ENCODE measurements at regions of chr20 and their contacts with region 1.

Region 1: DNA sequence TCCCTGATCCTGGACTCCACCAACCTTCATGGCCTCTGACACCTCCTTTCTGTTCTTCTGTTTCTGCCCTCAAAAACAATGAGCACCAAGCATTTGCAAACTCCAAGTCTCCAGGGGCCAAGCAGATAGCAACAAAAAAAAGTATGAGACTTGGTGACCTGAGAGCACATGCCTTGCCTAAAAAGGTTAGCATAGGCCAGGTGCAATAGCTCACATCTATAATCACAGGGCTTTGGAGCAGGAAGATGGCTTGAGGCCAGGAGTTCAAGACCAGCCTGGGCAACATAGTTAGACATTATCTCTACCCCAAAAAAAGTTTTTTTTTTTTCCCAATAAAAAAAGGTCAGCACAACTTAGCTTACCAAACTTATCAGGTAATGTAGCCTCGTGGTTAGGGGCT is 13.7 kb upstream of the HM13 start:
- DNase-seq: no peak
- ATAC-seq: no peak
- H3K4me3 ChIP-seq: no peak overlapping the region
- H3K27ac ChIP-seq: no peak overlapping the region
- H3K4me1 ChIP-seq: no peaks in the 10 kb centered on the region
- CTCF ChIP-seq: no peak
- EP300 ChIP-seq: no peak
- POLR2A ChIP-seq: no peak
- RAD21 ChIP-seq: no peak

Region 2: GRCh38 chr20:31414380-31414779 is 86.1 kb before region 1 on chr20:
- CTCF ChIA-PET with region 1: interaction called, 55 read pairs
- POLR2A ChIA-PET with region 1: interaction called, 4 read pairs
- DNase-seq: no peak
- ATAC-seq: no peak
- H3K4me3 ChIP-seq: no peak overlapping the region
- H3K27ac ChIP-seq: no peak overlapping the region
- H3K4me1 ChIP-seq: no peaks in the 10 kb centered on the region
- CTCF ChIP-seq: no peak
- EP300 ChIP-seq: no peak
- POLR2A ChIP-seq: no peak
- RAD21 ChIP-seq: no peak

Region 3: DNA sequence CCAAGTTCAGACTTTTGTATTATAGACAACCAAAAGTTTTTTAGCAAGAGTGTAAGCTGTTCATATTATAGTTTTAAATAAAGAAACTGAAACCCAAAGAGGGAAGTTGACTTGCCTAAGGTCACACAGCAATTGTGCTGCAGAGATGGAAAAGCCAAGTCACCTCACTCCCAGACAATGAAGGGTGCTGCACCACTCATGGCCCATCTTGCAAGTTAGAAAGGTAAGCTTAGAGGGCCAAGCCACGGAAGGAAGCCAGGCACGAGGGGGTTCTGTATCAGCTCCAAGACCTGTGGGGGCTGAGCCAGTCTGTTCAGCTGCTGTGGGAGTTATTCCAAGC is 26.5 kb before region 1 on chr20:
- CTCF ChIA-PET with region 1: interaction called, 12 read pairs
- POLR2A ChIA-PET with region 1: no interaction called
- DNase-seq: no peak
- ATAC-seq: no peak
- H3K4me3 ChIP-seq: no peak overlapping the region
- H3K27ac ChIP-seq: no peak overlapping the region; a peak in 1 of 6 replicates
- H3K4me1 ChIP-seq: peaks cover 8% of the 10 kb centered on the region; the same call in 2 of the 3 replicates
- CTCF ChIP-seq: no peak
- EP300 ChIP-seq: no peak
- POLR2A ChIP-seq: no peak
- RAD21 ChIP-seq: no peak

Region 4: GRCh38 chr20:31537890-31538289 is 37.4 kb after region 1 on chr20:
- CTCF ChIA-PET with region 1: no interaction called
- POLR2A ChIA-PET with region 1: no interaction called
- DNase-seq: no peak
- ATAC-seq: no peak
- H3K4me3 ChIP-seq: no peak overlapping the region
- H3K27ac ChIP-seq: no peak overlapping the region
- H3K4me1 ChIP-seq: peaks cover 18% of the 10 kb centered on the region
- CTCF ChIP-seq: no peak
- EP300 ChIP-seq: no peak
- POLR2A ChIP-seq: no peak
- RAD21 ChIP-seq: no peak

Measured in A549 (cell line).